ENCODE measurements at regions of chr7 and their contacts with region 1.

Region 1: GRCh38 chr7:30594549-30595435 is at the start of gene GARS1:
- DNase-seq: peak; percentile 68 to 91
- H3K4me3 ChIP-seq: peak within 1 kb of the TSS; percentile 90 to 98 (median 95)
- H3K27ac ChIP-seq: peak within 1 kb of the TSS; percentile 96
- H3K4me1 ChIP-seq: no peaks in the 10 kb centered on the region; a peak in 1 of 7 replicates
- H3K27me3 ChIP-seq: no peaks in the 10 kb centered on the region
- CTCF ChIP-seq: no peak
- EP300 ChIP-seq: peak; percentile 87 to 99
- POLR2A ChIP-seq: peak; percentile 93 to 97
- RAD21 ChIP-seq: no peak
- total RNA-seq, gene GARS1: 247 and 270 TPM in 2 replicates

Region 2: DNA sequence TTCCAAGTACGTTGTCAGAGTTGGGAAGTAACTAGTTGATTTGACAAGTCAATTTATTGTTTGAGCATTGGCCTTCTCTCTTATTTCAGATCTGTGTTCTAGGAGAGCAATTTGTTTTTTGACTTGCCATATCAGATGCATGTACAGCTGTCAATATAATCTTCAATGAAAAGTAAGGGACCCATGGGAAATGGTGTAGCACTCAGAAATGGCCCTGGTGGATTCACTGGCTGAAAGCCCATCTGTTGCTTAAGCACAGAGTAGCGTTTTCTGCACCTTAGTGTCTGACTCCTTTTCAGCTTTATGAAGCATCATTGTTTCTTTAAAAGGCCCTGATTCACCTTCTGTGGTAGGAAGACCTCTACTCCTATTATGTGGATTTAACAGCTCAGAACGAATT is 10.1 kb after region 1 on chr7:
- CTCF ChIA-PET with region 1: no interaction called
- POLR2A ChIA-PET with region 1: interaction called, 22 read pairs
- DNase-seq: no peak
- H3K4me3 ChIP-seq: no peak overlapping the region
- H3K27ac ChIP-seq: no peak overlapping the region
- H3K4me1 ChIP-seq: no peaks in the 10 kb centered on the region
- H3K27me3 ChIP-seq: no peaks in the 10 kb centered on the region
- CTCF ChIP-seq: no peak
- EP300 ChIP-seq: no peak
- POLR2A ChIP-seq: no peak
- RAD21 ChIP-seq: no peak

Region 3: DNA sequence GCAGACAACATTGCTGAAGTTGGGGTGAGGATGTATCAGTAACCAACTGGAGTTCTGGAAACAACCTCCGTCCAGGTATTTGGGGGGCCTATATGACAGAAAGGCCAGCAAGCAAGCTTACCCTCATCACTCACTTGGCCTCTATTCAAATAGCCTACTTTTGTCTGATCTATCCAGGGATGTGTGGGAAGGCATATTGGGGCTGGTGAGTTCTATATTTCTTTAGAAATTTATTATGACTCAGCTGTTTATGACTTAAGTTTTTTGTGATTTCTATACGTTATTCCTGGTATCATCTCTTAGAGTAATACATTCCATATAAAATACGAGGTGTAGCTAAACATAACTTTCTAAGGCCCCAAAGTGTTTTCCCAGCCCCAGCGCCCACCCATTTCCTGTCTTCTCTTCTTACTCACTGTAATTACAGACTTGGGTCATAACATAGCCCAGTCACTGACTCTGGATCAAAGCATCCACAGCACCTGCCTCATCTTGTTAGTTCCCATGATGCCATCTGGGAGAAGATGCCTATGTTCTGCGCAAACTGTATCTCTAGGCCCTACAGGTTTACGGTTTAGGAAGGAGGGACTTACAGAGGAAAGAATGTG is 18.0 kb after region 1 on chr7:
- CTCF ChIA-PET with region 1: no interaction called
- POLR2A ChIA-PET with region 1: interaction called, 323 read pairs
- DNase-seq: no peak
- H3K4me3 ChIP-seq: no peak overlapping the region
- H3K27ac ChIP-seq: no peak overlapping the region
- H3K4me1 ChIP-seq: no peaks in the 10 kb centered on the region
- H3K27me3 ChIP-seq: no peaks in the 10 kb centered on the region
- CTCF ChIP-seq: no peak
- EP300 ChIP-seq: no peak
- POLR2A ChIP-seq: 0 out of 3 replicates have a peak, but pooled peaks of 1 of the 2 experiments have one; percentile 22
- RAD21 ChIP-seq: no peak

Region 4: GRCh38 chr7:30625283-30625682 is 30.5 kb after region 1 on chr7:
- CTCF ChIA-PET with region 1: no interaction called
- POLR2A ChIA-PET with region 1: interaction called, 323 read pairs
- DNase-seq: no peak
- H3K4me3 ChIP-seq: no peak overlapping the region
- H3K27ac ChIP-seq: no peak overlapping the region
- H3K4me1 ChIP-seq: no peaks in the 10 kb centered on the region
- H3K27me3 ChIP-seq: no peaks in the 10 kb centered on the region
- CTCF ChIP-seq: no peak; a peak in 1 of 4 replicates
- EP300 ChIP-seq: no peak
- POLR2A ChIP-seq: no peak
- RAD21 ChIP-seq: peak; percentile 36 to 50